OCI-LY7 (cell line): ENCODE measurements at regions of chr12 and their contacts with region 1.

Region 1: DNA sequence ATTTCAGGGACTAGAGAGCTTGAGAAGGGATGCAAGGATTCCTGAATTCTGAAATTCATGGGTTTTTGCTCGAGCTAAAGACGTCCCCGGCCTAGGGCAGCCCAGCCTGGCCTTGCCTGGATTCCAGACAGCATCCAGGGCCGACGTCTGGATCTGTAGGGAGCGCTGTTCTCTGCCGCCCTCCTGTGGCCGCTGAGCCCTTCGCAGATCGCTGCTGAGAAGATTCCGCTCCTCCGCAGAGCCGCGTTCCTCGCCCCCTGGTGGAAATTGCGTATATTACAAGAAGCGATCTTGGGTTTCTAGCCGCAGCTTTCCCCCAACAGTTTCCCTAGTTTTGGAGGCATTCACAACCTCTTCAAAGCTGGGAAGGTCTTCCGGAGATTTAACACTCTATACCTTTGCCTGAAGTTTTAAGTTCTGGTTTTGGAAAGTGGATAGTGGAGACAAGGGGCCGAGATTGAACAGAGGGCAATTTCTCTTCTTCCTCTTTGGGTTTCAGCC is 5.1 kb downstream of the CISTR start:
- DNase-seq: peak; percentile 89
- H3K4me3 ChIP-seq: no peak overlapping the region
- H3K27ac ChIP-seq: no peak overlapping the region
- H3K4me1 ChIP-seq: peaks cover 45% of the 10 kb centered on the region
- CTCF ChIP-seq: peak; percentile 100

Region 2: GRCh38 chr12:53543539-53543938 is 203.1 kb before region 1 on chr12:
- CTCF ChIA-PET with region 1: interaction called, 3 read pairs
- POLR2A ChIA-PET with region 1: interaction called, 3 read pairs
- intact Hi-C with region 1: loop called (anchors 2 kb)
- DNase-seq: peak; percentile 78
- H3K4me3 ChIP-seq: no peak overlapping the region
- H3K27ac ChIP-seq: no peak overlapping the region
- H3K4me1 ChIP-seq: no peaks in the 10 kb centered on the region
- CTCF ChIP-seq: peak; percentile 96

Region 3: DNA sequence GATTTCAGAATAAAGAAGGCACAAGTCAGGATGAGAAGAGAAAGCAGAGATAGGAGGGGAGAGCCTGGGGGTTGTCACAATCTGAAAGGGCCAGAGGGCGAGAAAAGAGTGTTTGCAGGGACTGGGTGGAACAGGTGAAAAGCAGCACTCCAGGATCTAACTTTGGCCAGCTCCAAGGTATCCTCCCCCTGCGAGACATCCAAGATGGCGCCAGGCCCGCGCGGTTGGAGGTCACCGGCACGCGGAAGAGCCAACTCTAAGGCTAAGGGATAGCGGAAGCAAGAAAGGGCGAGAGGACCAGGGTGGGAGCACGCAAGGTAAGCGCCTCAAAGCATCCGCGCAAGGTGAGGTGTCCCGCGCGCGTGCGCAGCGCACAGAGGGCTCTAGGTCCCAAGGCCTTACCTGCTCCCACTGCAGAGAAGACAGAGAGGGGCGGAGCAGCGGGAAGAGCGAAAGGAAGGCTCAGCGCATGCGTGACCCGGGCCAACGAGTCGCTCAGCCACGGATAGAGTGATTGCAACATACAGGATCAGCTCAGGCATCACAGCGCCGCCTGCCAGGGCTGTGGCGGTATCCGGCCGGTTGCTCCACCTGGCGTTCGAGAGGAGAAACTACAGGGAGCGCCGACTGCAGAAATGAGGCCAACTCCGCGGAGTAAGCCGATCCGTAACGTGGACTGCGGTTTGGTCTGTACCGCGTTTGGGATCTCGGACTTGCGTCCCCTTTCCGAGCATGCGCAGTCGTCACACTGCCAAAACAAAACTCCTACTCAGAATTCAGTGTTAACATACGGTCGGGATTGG is 70.8 kb before region 1 on chr12 and contains the start of gene ATP5MC2:
- CTCF ChIA-PET with region 1: no interaction called
- POLR2A ChIA-PET with region 1: no interaction called
- intact Hi-C with region 1: loop called (anchors 2 kb)
- DNase-seq: peak; percentile 98
- H3K4me3 ChIP-seq: peak within 1 kb of the TSS; percentile 94
- H3K27ac ChIP-seq: peak within 1 kb of the TSS; percentile 77
- H3K4me1 ChIP-seq: peaks cover 23% of the 10 kb centered on the region
- CTCF ChIP-seq: peak; percentile 100
- total RNA-seq, gene ATP5MC2: 423 and 500 TPM in 2 replicates

Region 4: DNA sequence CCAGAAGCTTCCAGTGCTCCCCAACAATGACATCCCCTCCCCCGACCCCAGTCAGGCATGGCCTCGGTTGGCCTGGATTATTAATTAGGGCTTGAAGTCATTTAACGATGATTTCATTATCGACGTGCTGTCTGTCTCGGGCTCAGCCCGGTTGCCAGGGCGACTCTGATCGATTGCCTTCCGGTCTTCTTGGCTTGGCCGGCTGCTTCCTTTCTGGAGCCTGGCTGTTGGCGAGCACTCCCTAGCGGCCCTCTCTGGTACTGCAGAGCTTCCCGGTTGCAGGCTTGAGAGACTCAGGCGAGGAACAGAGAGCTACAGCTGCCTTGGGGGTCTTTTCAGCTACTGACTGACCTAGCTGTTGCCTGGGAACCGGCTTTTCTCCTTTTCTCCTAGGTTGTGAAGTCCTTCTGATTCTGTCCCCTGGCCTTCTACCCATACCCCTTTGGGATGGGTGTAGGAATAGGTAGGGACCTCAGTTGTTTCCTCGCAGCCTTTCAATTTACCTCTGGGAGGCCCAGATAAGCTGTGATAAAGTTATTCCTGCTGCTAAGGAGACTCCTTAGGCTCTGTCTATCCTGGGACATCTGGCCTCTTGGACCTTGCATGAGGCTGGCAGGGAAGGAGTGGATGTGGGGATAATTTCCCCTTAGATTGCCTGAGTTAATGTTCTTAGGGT is 10.6 kb after region 1 on chr12:
- CTCF ChIA-PET with region 1: interaction called, 26 read pairs
- POLR2A ChIA-PET with region 1: interaction called, 9 read pairs
- intact Hi-C with region 1: no loop called
- DNase-seq: peak; percentile 87
- H3K4me3 ChIP-seq: peak overlapping the region; percentile 74
- H3K27ac ChIP-seq: peak overlapping the region; percentile 94
- H3K4me1 ChIP-seq: peaks cover 60% of the 10 kb centered on the region
- CTCF ChIP-seq: peak; percentile 97

Region 5: GRCh38 chr12:53935383-53936341 is 189.0 kb after region 1 on chr12:
- CTCF ChIA-PET with region 1: no interaction called
- POLR2A ChIA-PET with region 1: no interaction called
- intact Hi-C with region 1: no loop called
- DNase-seq: no peak
- H3K4me3 ChIP-seq: no peak overlapping the region
- H3K27ac ChIP-seq: no peak overlapping the region
- H3K4me1 ChIP-seq: no peaks in the 10 kb centered on the region
- CTCF ChIP-seq: no peak

Region 6: GRCh38 chr12:54182086-54182485 is 435.4 kb after region 1 on chr12:
- CTCF ChIA-PET with region 1: no interaction called
- POLR2A ChIA-PET with region 1: no interaction called
- intact Hi-C with region 1: no loop called
- DNase-seq: no peak
- H3K4me3 ChIP-seq: no peak overlapping the region
- H3K27ac ChIP-seq: no peak overlapping the region
- H3K4me1 ChIP-seq: no peaks in the 10 kb centered on the region
- CTCF ChIP-seq: no peak